ENCODE measurements at regions of chr6 and their contacts with region 1.

Region 1: DNA sequence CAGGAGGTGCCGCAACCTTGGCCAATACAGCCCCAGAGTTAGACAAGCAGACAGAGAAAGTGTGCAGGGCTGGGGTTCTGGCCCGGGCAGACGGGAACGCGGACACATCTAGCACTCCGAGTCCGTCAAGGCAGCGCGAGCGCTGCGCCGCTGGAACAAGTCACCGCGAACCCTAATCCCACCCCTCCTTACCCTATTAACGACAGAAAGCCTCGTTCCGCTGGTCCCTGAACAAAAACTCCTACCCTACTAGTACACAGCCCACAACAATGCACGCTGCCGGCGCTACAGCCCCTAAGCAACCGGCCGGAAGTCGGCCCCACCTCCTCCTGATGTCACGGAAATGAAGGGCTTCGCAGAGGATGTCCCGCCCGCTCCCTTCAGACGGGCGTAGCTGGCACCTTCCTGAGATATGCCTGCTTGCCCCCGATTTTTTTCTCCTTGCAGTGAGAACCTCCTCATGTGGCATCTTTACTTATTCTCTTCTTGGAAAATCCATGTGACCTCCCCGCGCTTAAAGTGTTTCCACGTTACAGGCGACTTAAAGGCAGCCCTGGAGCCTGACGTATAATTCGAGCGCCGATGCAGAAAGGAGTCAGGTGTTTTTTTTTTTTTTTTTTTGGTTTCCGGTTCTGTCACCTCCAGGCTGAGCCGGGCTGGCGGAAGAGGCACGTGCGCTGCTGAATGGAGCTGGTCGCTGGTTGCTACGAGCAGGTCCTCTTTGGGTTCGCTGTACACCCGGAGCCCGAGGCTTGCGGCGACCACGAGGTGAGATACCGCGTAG is at the starts of genes C6orf52 and PAK1IP1:
- DNase-seq: peak; percentile 77 to 97 (median 96)
- ATAC-seq: peak; percentile 95
- H3K4me3 ChIP-seq: peak within 1 kb of the TSS; percentile 99
- H3K4me3 Mint-ChIP-seq: peak within 1 kb of the TSS; percentile 88 to 98 (median 94)
- H3K27ac ChIP-seq: peak within 1 kb of the TSS; percentile 90
- H3K27ac Mint-ChIP-seq: peak within 1 kb of the TSS; percentile 99 to 100 (median 100)
- H3K4me1 ChIP-seq: peaks cover 13 to 18% of the 10 kb centered on the region in 2 donors
- H3K4me1 Mint-ChIP-seq: peaks cover 20 to 52% (median 49%) of the 10 kb centered on the region in 7 donors
- H3K27me3 ChIP-seq: no peaks in the 10 kb centered on the region
- H3K27me3 Mint-ChIP-seq: peaks cover 0 to 4% (median 0%) of the 10 kb centered on the region in 5 donors
- total RNA-seq, gene C6orf52: 1.2 to 1.9 TPM in 2 of 5 experiments, not detected in the others
- total RNA-seq, gene PAK1IP1: 5.2 to 15.2 (median 8.0) TPM

Region 2: DNA sequence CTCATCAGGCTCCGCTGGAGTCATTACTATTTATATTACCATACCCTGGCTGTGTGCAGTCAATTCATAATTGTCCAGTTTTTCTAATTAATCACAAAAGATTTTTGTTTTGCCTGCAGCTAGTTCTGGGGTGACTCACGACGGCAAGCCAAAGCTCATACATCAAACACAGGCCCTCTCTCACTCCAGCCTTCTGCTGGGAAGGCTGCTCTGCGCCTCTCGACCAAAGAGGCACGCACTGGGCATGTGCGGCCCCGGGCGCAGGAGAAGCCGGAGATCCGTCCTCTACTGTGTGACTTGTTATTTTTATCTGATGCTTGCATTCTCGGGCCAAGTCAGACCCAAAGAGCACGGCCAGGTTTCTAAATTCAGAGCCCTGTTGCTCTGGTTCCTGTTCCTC is 378.2 kb before region 1 on chr6:
- CTCF ChIA-PET with region 1: no interaction called
- POLR2A ChIA-PET with region 1: no interaction called
- intact Hi-C with region 1: no loop called
- DNase-seq: no peak
- ATAC-seq: no peak
- H3K4me3 ChIP-seq: no peak overlapping the region
- H3K4me3 Mint-ChIP-seq: no peak overlapping the region
- H3K27ac ChIP-seq: no peak overlapping the region
- H3K27ac Mint-ChIP-seq: no peak overlapping the region
- H3K4me1 ChIP-seq: no peaks in the 10 kb centered on the region
- H3K4me1 Mint-ChIP-seq: no peaks in the 10 kb centered on the region
- H3K27me3 ChIP-seq: no peaks in the 10 kb centered on the region
- H3K27me3 Mint-ChIP-seq: peaks cover 0 to 12% (median 0%) of the 10 kb centered on the region in 5 donors

Region 3: DNA sequence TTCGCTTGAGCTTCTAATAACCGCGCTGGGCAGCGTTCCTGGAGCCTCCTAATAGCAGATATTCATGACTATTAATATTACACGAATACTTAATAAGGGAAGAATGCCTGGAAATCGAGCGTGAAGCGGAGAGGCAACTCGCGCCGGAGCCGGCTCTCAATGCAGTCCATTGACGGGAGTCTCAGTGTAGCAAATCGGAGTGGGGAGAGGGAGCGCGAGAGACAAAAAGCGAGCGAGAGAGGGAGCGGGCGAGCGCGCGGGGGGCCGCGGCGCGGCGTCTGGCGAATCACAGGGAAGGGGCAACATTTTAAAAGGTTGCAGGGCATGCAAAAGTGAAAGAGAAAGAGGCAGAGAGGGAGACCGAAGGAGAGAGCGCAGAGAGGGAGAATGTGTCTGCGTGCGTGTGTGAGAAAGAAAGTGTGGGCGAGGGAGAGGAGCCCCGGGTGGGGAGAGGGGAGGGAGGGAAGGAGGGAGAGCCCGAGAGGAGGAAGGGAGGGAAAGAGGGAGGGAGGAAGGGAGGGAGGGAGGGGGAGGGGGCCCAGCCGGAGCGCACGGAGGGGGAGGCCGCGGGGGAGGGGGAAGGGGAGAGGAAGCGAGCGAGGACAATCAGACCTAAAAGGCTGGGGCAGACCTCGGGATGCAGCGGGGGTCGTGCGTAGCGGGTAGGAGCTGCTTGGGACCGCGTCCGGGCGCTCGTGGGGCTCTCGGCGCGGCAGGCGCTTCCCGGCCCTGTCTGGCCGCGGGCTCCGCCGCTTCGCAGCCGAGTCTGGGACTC is 282.3 kb before region 1 on chr6:
- CTCF ChIA-PET with region 1: no interaction called
- POLR2A ChIA-PET with region 1: no interaction called
- intact Hi-C with region 1: loop called in 1 of 2 experiments (anchors 1 kb)
- DNase-seq: peak in 7 of 9 donors; percentile 32 to 59 (median 42)
- ATAC-seq: peak; percentile 69
- H3K4me3 ChIP-seq: peak overlapping the region; percentile 68
- H3K4me3 Mint-ChIP-seq: peak overlapping the region; percentile 88 to 98 (median 96)
- H3K27ac ChIP-seq: no peak overlapping the region
- H3K27ac Mint-ChIP-seq: peak overlapping the region; percentile 56 to 91 (median 80)
- H3K4me1 ChIP-seq: peaks cover 8 to 39% of the 10 kb centered on the region in 2 donors
- H3K4me1 Mint-ChIP-seq: peaks cover 36 to 63% (median 44%) of the 10 kb centered on the region in 7 donors
- H3K27me3 ChIP-seq: peaks cover 32 to 49% of the 10 kb centered on the region in 2 donors
- H3K27me3 Mint-ChIP-seq: peaks cover 88 to 95% (median 91%) of the 10 kb centered on the region in 5 donors

Region 4: GRCh38 chr6:10478187-10479040 is 216.1 kb before region 1 on chr6:
- CTCF ChIA-PET with region 1: no interaction called
- POLR2A ChIA-PET with region 1: no interaction called
- intact Hi-C with region 1: no loop called
- DNase-seq: peak in 3 of 9 donors; percentile 4 to 31 (median 15)
- ATAC-seq: no peak
- H3K4me3 ChIP-seq: no peak overlapping the region
- H3K4me3 Mint-ChIP-seq: no peak overlapping the region
- H3K27ac ChIP-seq: no peak overlapping the region
- H3K27ac Mint-ChIP-seq: no peak overlapping the region
- H3K4me1 ChIP-seq: no peaks in the 10 kb centered on the region
- H3K4me1 Mint-ChIP-seq: peaks cover 0 to 3% (median 0%) of the 10 kb centered on the region in 7 donors
- H3K27me3 ChIP-seq: no peaks in the 10 kb centered on the region
- H3K27me3 Mint-ChIP-seq: peaks cover 0 to 36% (median 22%) of the 10 kb centered on the region in 5 donors

Region 5: DNA sequence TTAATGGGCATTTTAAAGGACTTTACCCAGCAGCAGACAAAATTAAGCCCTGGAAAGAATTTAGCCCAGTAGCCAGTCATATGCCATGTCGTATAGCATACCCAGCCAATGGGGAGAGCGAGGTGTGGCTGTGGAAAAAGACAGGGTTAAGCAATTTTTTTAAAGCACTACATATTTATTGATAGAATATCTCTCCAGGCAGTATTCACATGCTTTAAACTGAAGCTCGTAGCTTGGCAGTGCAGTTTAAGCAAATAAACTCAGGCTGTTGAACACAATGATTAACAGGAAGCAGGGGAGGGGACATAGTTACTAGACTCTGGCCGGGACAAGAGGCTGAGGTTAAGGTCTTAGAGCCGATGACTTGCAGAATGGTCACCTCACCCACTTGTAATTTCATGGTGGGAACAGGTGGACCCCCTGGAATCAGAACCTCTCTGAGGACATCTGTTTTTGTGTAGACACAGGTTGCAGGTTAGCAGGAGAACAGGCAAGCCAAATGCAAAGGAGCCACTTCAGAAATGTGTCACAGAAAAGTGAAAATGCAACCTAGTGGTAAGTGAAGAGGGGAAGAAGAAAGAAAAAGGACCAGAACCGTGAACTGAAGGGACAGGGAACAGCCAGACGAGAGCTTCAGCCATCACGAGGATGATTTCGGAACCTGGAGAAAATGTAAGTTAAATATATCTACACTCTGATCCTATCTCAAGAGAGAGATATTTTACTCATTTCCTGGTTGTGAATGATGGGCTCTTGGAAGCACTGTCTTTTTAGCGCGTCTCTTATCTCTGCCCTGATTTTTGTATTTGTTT is 166.1 kb before region 1 on chr6:
- CTCF ChIA-PET with region 1: interaction called, 3 read pairs
- POLR2A ChIA-PET with region 1: interaction called, 6 read pairs
- intact Hi-C with region 1: loop called (anchors 1 kb)
- DNase-seq: peak in 6 of 9 donors; percentile 13 to 36 (median 27)
- ATAC-seq: peak; percentile 70
- H3K4me3 ChIP-seq: peak overlapping the region; percentile 70
- H3K4me3 Mint-ChIP-seq: peak overlapping the region; percentile 87 to 98 (median 94)
- H3K27ac ChIP-seq: peak overlapping the region; percentile 69
- H3K27ac Mint-ChIP-seq: peak overlapping the region; percentile 74 to 95 (median 90)
- H3K4me1 ChIP-seq: peaks cover 10 to 15% of the 10 kb centered on the region in 2 donors
- H3K4me1 Mint-ChIP-seq: peaks cover 32 to 52% (median 44%) of the 10 kb centered on the region in 7 donors
- H3K27me3 ChIP-seq: no peaks in the 10 kb centered on the region
- H3K27me3 Mint-ChIP-seq: peaks cover 0 to 5% (median 0%) of the 10 kb centered on the region in 5 donors

Region 6: GRCh38 chr6:10722820-10723566 is 28.5 kb after region 1 on chr6 and contains the start of gene TMEM14C:
- CTCF ChIA-PET with region 1: no interaction called
- POLR2A ChIA-PET with region 1: interaction called, 46 read pairs
- intact Hi-C with region 1: loop called (anchors 1 kb)
- DNase-seq: peak; percentile 48 to 93 (median 61)
- ATAC-seq: peak; percentile 86
- H3K4me3 ChIP-seq: peak within 1 kb of the TSS; percentile 82
- H3K4me3 Mint-ChIP-seq: peak within 1 kb of the TSS; percentile 91 to 98 (median 96)
- H3K27ac ChIP-seq: peak within 1 kb of the TSS; percentile 76
- H3K27ac Mint-ChIP-seq: peak within 1 kb of the TSS; percentile 89 to 97 (median 94)
- H3K4me1 ChIP-seq: peaks cover 14 to 15% of the 10 kb centered on the region in 2 donors
- H3K4me1 Mint-ChIP-seq: peaks cover 27 to 62% (median 53%) of the 10 kb centered on the region in 7 donors
- H3K27me3 ChIP-seq: no peaks in the 10 kb centered on the region
- H3K27me3 Mint-ChIP-seq: no peaks in the 10 kb centered on the region
- total RNA-seq, gene TMEM14C: 20.2 to 64.3 (median 25.0) TPM

Region 7: DNA sequence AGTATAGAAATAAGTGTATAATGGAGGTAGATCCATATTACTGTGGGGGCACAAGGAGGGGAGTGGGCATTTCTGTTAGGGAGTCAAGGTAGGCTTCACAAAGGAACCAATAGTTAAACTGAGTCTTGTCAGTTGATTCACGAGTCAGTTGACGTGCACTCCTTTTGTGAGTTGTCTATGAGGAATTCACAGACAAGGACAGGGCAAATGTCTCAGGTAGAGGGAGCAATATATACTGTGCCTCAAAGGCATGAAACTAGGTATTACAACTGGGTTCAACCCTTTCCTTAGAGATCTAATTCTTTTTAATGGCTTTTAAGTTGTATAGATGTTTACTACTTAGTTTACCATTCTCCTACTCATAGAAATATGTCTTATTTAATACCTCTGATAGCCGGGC is 39.4 kb after region 1 on chr6:
- CTCF ChIA-PET with region 1: no interaction called
- POLR2A ChIA-PET with region 1: no interaction called
- intact Hi-C with region 1: no loop called
- DNase-seq: no peak
- ATAC-seq: no peak
- H3K4me3 ChIP-seq: no peak overlapping the region
- H3K4me3 Mint-ChIP-seq: no peak overlapping the region
- H3K27ac ChIP-seq: no peak overlapping the region
- H3K27ac Mint-ChIP-seq: no peak overlapping the region
- H3K4me1 ChIP-seq: peaks cover 0 to 6% of the 10 kb centered on the region in 2 donors
- H3K4me1 Mint-ChIP-seq: peaks cover 0 to 4% (median 0%) of the 10 kb centered on the region in 7 donors
- H3K27me3 ChIP-seq: no peaks in the 10 kb centered on the region
- H3K27me3 Mint-ChIP-seq: no peaks in the 10 kb centered on the region

Region 8: GRCh38 chr6:10800829-10801535 is 106.5 kb after region 1 on chr6:
- CTCF ChIA-PET with region 1: no interaction called
- POLR2A ChIA-PET with region 1: no interaction called
- intact Hi-C with region 1: loop called (anchors 1 to 5 kb)
- DNase-seq: peak; percentile 21 to 68 (median 56)
- ATAC-seq: peak; percentile 91
- H3K4me3 ChIP-seq: no peak overlapping the region
- H3K4me3 Mint-ChIP-seq: no peak overlapping the region
- H3K27ac ChIP-seq: no peak overlapping the region
- H3K27ac Mint-ChIP-seq: no peak overlapping the region
- H3K4me1 ChIP-seq: no peaks in the 10 kb centered on the region
- H3K4me1 Mint-ChIP-seq: peaks cover 0 to 2% (median 0%) of the 10 kb centered on the region in 7 donors
- H3K27me3 ChIP-seq: no peaks in the 10 kb centered on the region
- H3K27me3 Mint-ChIP-seq: no peaks in the 10 kb centered on the region

Measured in naive thymus-derived CD4-positive, alpha-beta T cell (primary cell).